ENCODE measurements at regions of chr2 and their contacts with region 1.

Region 1: GRCh38 chr2:230847883-230848388 is 16.8 kb upstream of the ITM2C start:
- DNase-seq: peak; percentile 92
- ATAC-seq: peak; percentile 97
- H3K4me3 Mint-ChIP-seq: no peak overlapping the region
- H3K27ac Mint-ChIP-seq: no peak overlapping the region
- H3K4me1 Mint-ChIP-seq: peaks cover 17% of the 10 kb centered on the region
- H3K27me3 Mint-ChIP-seq: peaks cover 35% of the 10 kb centered on the region

Region 2: DNA sequence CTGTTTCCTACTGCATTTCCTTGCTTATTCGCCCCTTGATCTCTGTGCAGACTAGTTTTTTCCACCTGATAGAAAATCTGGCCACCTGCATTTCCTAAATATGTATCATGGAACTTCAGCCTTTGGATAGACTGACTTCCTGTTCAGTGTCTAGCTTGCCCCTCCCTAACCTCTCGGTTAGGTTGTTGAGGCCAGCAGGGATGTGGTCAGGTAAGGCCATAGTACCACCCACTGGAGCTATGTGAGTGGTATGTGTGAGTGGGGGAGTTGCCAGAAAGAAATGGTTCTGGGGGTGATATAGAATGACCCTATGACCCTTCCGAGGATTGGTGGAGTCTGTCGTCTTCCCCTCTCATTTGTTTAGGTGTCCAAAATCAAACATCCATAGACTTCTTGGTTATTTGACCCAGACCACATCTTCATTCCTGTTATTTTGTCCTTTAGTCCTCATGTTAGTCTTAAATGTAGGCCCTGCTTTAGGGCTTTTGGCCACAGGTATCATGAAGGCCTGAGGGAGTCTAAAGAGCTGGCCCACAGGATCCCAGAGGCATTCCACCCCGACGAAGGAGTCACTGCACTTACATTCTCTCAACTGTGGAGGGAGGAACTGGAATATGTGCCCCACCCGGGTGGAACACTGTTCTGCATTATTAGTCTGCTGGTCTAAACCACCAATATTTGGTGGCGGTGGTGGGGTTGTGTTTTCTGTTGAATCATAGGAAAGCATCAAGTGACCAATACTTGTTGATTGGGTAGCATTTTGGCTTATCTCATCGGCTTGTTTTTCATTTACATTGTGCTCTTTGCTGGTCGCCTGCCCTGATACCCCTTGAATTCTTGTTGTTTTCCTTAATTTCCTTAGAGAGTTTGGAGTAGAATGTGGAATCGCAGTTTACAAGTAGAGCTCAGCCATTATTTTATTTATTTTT is 113.4 kb before region 1 on chr2:
- CTCF ChIA-PET with region 1: no interaction called
- POLR2A ChIA-PET with region 1: no interaction called
- DNase-seq: no peak
- ATAC-seq: no peak
- H3K4me3 Mint-ChIP-seq: no peak overlapping the region
- H3K27ac Mint-ChIP-seq: peak overlapping the region; percentile 67
- H3K4me1 Mint-ChIP-seq: peaks cover 78% of the 10 kb centered on the region
- H3K27me3 Mint-ChIP-seq: no peaks in the 10 kb centered on the region

Region 3: DNA sequence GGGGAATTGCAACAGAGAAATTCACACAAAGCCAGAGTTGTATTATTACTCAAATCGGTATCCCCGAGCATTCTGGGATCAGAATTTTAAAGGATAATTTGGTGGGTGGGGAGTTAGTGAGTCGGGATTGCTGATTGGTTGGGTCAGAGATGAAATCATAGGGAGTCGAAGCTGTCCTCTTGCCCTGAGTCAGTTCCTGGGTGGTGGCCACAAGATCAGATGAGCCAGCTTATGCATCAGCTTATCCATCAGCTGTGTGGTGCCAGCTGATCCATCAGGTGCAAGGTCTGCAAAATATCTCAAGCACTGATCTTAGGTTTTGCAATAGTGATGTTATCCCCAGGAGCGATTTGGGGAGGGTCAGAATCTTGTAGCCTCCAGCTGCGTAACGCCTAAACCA is 17.5 kb before region 1 on chr2:
- CTCF ChIA-PET with region 1: interaction called, 18 read pairs
- POLR2A ChIA-PET with region 1: no interaction called
- DNase-seq: no peak
- ATAC-seq: no peak
- H3K4me3 Mint-ChIP-seq: no peak overlapping the region
- H3K27ac Mint-ChIP-seq: no peak overlapping the region
- H3K4me1 Mint-ChIP-seq: peaks cover 18% of the 10 kb centered on the region
- H3K27me3 Mint-ChIP-seq: peaks cover 52% of the 10 kb centered on the region

Region 4: GRCh38 chr2:230861552-230862255 is 13.8 kb after region 1 on chr2:
- CTCF ChIA-PET with region 1: interaction called, 30 read pairs
- POLR2A ChIA-PET with region 1: no interaction called
- DNase-seq: peak; percentile 42
- ATAC-seq: no peak
- H3K4me3 Mint-ChIP-seq: peak overlapping the region; percentile 0
- H3K27ac Mint-ChIP-seq: peak overlapping the region; percentile 7
- H3K4me1 Mint-ChIP-seq: peaks cover 35% of the 10 kb centered on the region
- H3K27me3 Mint-ChIP-seq: peaks cover 28% of the 10 kb centered on the region

Region 5: DNA sequence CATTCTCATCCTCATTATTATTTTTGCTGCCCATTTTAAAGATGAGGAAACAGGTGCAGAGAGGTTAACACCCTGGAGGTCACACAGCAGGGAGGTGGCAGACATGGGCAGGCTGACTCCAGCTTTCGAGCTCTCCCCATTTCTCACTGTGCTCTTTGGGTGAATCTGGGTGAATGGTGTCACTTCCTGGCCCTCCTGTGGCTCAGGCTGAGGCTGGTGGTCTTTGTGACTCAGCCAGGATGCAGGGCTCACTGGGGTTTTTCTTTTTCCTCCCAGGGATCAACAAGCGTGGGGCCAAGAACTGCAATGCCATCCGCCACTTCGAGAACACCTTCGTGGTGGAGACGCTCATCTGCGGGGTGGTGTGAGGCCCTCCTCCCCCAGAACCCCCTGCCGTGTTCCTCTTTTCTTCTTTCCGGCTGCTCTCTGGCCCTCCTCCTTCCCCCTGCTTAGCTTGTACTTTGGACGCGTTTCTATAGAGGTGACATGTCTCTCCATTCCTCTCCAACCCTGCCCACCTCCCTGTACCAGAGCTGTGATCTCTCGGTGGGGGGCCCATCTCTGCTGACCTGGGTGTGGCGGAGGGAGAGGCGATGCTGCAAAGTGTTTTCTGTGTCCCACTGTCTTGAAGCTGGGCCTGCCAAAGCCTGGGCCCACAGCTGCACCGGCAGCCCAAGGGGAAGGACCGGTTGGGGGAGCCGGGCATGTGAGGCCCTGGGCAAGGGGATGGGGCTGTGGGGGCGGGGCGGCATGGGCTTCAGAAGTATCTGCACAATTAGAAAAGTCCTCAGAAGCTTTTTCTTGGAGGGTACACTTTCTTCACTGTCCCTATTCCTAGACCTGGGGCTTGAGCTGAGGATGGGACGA is 30.0 kb after region 1 on chr2:
- CTCF ChIA-PET with region 1: interaction called, 17 read pairs
- POLR2A ChIA-PET with region 1: no interaction called
- DNase-seq: peak; percentile 83
- ATAC-seq: peak; percentile 90
- H3K4me3 Mint-ChIP-seq: peak overlapping the region; percentile 32
- H3K27ac Mint-ChIP-seq: peak overlapping the region; percentile 91
- H3K4me1 Mint-ChIP-seq: peaks cover 56% of the 10 kb centered on the region
- H3K27me3 Mint-ChIP-seq: no peaks in the 10 kb centered on the region